Activated CD4-positive, alpha-beta T cell treated with anti-CD3 and anti-CD28 coated beads for 36 hours (primary cell): ENCODE measurements at regions of chr2 and their contacts with region 1.

Region 1: DNA sequence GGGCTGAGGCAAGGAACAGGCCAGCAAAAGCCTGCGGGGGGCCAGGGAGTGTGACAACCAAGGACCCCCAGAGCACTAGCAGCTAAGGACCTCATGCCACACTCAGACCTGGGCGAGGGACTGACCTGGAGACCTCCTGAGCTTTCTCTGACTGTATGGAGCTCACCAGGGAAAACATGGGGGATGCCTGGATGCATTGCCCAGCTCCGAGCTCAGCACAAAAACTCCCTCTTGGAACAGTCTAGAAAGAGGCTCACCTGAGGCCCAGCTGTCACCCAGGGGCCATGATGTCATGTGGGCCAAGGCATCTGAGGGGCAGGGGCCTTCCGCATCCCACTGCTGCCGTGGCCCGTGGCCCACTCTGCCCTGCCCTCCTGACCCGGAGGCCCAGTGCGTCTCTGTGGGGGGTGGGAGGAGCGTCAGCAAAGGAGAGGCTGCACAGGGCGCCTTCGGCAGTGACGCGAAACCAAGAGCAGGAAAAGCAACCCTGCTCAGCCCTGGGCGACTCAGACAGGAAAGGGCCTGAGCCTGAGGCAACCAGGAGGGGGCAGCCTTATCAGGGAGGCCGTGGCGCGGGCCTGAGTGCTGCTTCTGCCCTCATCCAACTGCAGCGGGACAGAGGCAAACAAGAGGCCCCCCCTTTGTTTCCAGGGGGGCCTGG is 57.3 kb upstream of the ALPP start:
- DNase-seq: peak; percentile 88
- ATAC-seq: peak; percentile 90
- H3K4me3 Mint-ChIP-seq: peak overlapping the region; percentile 44
- H3K27ac Mint-ChIP-seq: peak overlapping the region; percentile 89
- H3K4me1 Mint-ChIP-seq: peaks cover 64% of the 10 kb centered on the region
- H3K27me3 Mint-ChIP-seq: no peaks in the 10 kb centered on the region

Region 2: DNA sequence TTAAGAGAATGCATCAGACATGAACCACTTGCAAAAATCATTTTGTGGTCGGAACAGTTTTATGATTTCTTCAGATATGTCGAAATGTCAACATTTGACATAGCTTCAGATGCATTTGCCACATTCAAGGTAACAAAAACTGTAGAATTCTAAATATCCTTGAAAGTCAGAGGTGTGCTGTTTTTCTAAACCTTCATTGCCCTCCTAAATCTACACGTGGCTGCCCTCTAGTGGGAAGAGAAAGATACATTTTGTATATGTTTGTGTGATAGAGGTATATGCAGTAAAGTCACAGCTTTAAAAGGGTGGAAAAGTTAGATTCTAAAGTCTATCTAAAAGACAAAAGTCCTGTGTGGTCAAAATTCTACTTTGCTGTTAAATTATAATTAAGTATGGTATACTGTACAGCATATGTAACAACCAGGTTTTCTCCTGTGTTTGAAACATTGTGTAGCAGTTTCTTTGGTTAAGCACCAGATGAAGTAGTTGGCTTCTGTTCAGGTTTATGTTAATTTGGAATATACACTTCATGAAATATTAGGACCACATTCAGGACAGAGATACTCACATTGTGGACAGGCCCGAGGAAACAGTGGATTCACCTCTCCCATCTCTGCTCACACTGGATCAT is 1522.4 kb before region 1 on chr2:
- CTCF ChIA-PET with region 1: no interaction called
- POLR2A ChIA-PET with region 1: no interaction called
- intact Hi-C with region 1: no loop called
- DNase-seq: peak; percentile 63
- ATAC-seq: no peak
- H3K4me3 Mint-ChIP-seq: no peak overlapping the region
- H3K27ac Mint-ChIP-seq: peak overlapping the region; percentile 82
- H3K4me1 Mint-ChIP-seq: peaks cover 18% of the 10 kb centered on the region
- H3K27me3 Mint-ChIP-seq: no peaks in the 10 kb centered on the region

Region 3: DNA sequence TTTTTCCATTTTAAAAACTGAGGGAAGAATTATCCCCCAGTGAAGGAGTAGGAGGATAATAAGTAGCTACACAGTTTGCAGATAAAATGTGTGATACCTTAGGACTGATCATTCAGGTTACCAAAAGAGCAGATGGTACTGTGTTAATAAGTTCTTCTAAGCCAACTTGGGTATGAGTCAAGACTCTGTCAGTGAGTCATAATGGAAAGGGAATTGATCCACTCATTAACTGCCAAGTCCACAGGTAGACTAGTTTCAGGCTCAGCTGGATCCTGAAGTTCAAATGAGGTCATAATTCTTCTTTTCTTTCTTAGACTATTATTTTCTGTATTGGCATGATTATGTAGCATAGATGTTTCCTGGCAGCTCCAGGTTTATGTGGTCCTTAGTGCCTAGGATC is 85.1 kb before region 1 on chr2:
- CTCF ChIA-PET with region 1: interaction called, 6 read pairs
- POLR2A ChIA-PET with region 1: no interaction called
- intact Hi-C with region 1: loop called in 1 of 2 experiments (anchors 5 kb)
- DNase-seq: no peak
- ATAC-seq: peak; percentile 69
- H3K4me3 Mint-ChIP-seq: no peak overlapping the region
- H3K27ac Mint-ChIP-seq: peak overlapping the region; percentile 58
- H3K4me1 Mint-ChIP-seq: peaks cover 64% of the 10 kb centered on the region
- H3K27me3 Mint-ChIP-seq: no peaks in the 10 kb centered on the region

Region 4: DNA sequence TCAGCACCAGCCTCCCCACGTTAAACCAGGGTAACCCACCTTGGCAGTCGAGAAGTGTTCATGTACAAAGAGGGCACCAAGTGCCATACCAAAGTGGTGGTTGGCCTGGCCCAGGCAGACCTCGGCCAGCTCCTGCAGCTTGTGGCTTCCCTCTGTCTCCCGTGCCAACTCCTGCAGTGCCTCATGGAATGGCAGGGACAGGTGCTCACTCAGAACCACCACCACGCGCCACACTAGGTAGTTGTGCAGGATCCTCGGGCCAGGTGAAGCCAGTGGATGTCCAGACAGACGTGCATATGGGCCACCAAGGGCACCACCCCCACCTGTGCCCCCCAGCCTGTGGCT is 29.0 kb after region 1 on chr2:
- CTCF ChIA-PET with region 1: no interaction called
- POLR2A ChIA-PET with region 1: no interaction called
- intact Hi-C with region 1: no loop called
- DNase-seq: no peak
- ATAC-seq: no peak
- H3K4me3 Mint-ChIP-seq: no peak overlapping the region
- H3K27ac Mint-ChIP-seq: no peak overlapping the region
- H3K4me1 Mint-ChIP-seq: peaks cover 3% of the 10 kb centered on the region
- H3K27me3 Mint-ChIP-seq: peaks cover 18% of the 10 kb centered on the region

Region 5: GRCh38 chr2:232600053-232600773 is 278.9 kb after region 1 on chr2:
- CTCF ChIA-PET with region 1: no interaction called
- POLR2A ChIA-PET with region 1: no interaction called
- intact Hi-C with region 1: no loop called
- DNase-seq: no peak
- ATAC-seq: no peak
- H3K4me3 Mint-ChIP-seq: no peak overlapping the region
- H3K27ac Mint-ChIP-seq: no peak overlapping the region
- H3K4me1 Mint-ChIP-seq: no peaks in the 10 kb centered on the region
- H3K27me3 Mint-ChIP-seq: no peaks in the 10 kb centered on the region